ENCODE measurements at regions of chr5 and their contacts with region 1.

Region 1: DNA sequence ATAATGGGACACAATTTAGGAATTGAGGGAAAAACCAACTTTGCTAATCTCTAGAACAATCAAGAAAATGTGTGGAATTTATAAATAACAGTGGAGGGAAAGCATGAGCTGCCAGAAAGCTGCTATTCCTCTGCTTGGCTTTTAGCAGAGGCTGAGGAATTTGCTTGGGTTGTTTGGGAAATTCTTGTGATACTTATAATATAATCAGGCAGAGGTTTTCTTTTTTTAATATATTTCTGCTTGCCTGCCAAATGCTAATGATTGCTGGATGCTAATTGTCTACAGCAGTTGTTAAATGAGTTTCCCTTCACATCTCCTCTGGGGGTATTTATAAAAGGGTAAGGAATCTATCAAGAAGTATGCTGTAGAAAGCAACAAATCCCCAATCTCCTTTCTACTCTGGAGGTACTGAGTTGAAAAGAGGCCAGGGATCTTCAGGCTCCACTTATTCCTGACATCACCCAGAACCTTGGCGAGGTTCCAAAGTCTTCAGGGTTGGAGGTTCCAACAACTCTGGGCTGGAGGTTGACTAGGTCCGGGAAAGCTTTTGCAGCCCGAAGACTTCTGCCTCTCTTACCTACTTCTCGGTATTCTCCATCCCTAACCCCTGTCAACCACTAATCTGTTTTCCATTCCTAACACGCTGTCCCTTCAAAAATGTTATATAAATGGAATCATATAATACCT is 60.4 kb upstream of the TMED7 start:
- DNase-seq: peak in 1 of 2 donors; percentile 69
- H3K4me3 ChIP-seq: no peak overlapping the region
- H3K27ac ChIP-seq: peak overlapping the region; percentile 46 to 66
- H3K4me1 ChIP-seq: peaks cover 0 to 13% of the 10 kb centered on the region in 2 donors
- H3K27me3 ChIP-seq: no peaks in the 10 kb centered on the region
- CTCF ChIP-seq: no peak

Region 2: GRCh38 chr5:115586601-115587048 is 99.6 kb before region 1 on chr5:
- intact Hi-C with region 1: no loop called
- DNase-seq: no peak
- H3K4me3 ChIP-seq: no peak overlapping the region
- H3K27ac ChIP-seq: no peak overlapping the region
- H3K4me1 ChIP-seq: no peaks in the 10 kb centered on the region
- H3K27me3 ChIP-seq: no peaks in the 10 kb centered on the region
- CTCF ChIP-seq: peak; percentile 33 to 64 (median 55)

Region 3: DNA sequence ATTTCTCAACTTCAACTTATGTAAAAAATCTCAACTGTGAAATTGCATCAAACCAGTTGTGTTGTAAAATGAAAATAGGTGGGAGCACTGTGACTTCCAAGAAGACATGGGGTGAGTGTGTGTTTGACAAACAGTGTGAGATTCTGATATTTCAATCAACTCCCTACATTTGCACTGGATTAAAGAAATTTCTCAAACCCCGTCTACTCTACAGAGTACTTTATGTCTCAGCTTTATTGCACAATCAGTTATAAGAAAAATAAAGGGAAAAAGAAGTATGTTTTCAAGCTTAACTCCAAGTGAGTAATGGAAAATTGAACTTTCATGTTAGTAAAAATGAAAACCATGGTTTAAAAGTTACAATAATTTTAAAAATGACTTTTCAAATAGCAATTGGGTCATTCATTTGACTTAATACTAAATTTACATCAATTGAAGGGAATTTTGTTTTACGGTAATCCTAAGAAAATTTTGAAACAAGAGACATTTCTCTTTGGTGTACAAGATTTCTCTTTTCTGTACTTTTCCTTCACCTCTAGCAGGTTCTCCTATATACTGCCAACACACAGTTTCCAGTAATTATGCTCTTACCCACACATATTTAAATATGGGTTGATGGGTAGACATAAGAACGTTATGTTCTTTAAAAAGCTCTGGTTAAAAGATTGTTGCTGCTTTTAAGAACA is 50.0 kb after region 1 on chr5:
- intact Hi-C with region 1: loop called (anchors 2 kb)
- DNase-seq: no peak
- H3K4me3 ChIP-seq: no peak overlapping the region
- H3K27ac ChIP-seq: peak overlapping the region; percentile 32 to 42
- H3K4me1 ChIP-seq: peaks cover 0 to 3% of the 10 kb centered on the region in 2 donors
- H3K27me3 ChIP-seq: no peaks in the 10 kb centered on the region
- CTCF ChIP-seq: no peak

Region 4: DNA sequence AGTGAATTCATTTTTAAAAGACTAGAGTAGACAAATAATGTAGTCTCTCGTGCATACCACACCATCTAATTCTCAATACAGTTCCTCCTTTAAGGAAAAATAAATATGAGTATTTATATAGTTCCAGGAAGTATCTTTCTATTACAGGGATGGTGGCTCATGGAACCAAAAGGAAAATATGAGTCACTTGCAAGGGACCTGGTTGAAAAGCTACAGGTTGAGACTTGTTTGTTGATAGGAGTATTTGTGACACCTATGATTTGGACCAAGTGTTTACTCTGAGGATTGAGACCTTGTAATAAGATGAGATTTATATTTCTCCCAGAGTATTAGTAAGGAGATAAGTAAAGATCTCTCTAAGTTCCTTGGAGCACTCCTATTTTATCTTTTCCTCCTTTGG is 62.8 kb after region 1 on chr5:
- intact Hi-C with region 1: no loop called
- DNase-seq: no peak
- H3K4me3 ChIP-seq: no peak overlapping the region
- H3K27ac ChIP-seq: no peak overlapping the region
- H3K4me1 ChIP-seq: no peaks in the 10 kb centered on the region
- H3K27me3 ChIP-seq: no peaks in the 10 kb centered on the region
- CTCF ChIP-seq: no peak

Region 5: DNA sequence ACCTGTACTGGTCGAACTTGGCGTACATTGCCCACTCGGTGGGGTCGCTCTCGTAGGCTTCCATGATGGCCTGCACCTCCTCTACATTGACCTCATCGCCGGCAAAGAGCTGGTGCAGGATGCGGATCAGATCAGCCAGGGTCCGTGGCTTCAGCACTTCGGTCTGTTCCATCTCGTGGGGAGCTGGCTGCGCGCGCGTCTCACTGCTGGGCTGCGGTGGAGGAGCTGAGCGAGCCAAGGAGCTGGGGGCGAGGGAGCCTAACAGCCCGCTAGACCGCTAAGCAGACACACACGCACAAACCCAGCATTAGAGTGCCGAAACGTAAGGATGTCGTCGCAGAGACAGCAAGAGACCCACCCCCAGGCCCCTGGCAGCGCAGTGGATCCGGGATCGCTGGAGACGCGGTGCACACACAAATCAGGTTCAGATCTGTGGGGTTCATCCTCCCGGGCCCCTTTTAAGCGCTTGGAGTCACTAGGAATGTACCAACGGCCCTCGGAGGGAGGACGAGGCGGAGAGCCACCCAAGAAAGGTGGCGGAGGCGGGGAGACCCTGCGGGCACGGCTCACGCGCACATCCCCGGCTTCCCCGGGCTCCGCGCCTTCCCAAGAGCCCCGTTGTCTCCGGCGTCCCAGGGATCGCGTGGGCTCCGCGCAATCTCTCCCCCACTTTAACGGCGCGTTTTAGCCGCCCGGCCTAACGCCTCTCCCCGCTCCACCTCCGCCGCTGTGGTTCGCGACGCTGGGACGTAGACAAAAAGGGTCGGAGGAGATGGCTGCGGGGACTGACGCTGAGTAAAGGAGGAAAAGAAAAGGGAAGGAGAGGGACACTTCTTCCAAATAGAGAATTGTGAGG is 130.3 kb after region 1 on chr5 and contains the start of gene CDO1:
- intact Hi-C with region 1: loop called (anchors 5 kb)
- DNase-seq: peak in 1 of 2 donors; percentile 78
- H3K4me3 ChIP-seq: peak within 1 kb of the TSS; percentile 56 to 89
- H3K27ac ChIP-seq: peak within 1 kb of the TSS; percentile 85 to 88
- H3K4me1 ChIP-seq: peaks cover 0 to 3% of the 10 kb centered on the region in 2 donors
- H3K27me3 ChIP-seq: no peaks in the 10 kb centered on the region
- CTCF ChIP-seq: no peak
- total RNA-seq, gene CDO1: 36.0 TPM

Measured in ascending aorta (tissue), 2 donors.